Pancreas (tissue), 10 donors: ENCODE measurements at regions of chr1 and their contacts with region 1.

Region 1: GRCh38 chr1:155309423-155310021 is 856 bp downstream of the FDPS start:
- DNase-seq: peak; percentile 35 to 89 (median 68)
- ATAC-seq: peak in 3 of 4 donors; percentile 4 to 8 (median 5)
- H3K4me3 ChIP-seq: peak overlapping the region; percentile 50 to 95 (median 82)
- H3K27ac ChIP-seq: peak overlapping the region; percentile 76 to 90 (median 82)
- H3K4me1 ChIP-seq: peaks cover 0 to 7% (median 0%) of the 10 kb centered on the region in 3 donors
- H3K27me3 ChIP-seq: no peaks in the 10 kb centered on the region
- CTCF ChIP-seq: no peak

Region 2: GRCh38 chr1:155277070-155277895 is 32.2 kb before region 1 on chr1 and contains the start of gene HCN3:
- intact Hi-C with region 1: loop called in 1 of 3 experiments (anchors 5 kb)
- DNase-seq: peak; percentile 96 to 99 (median 98)
- ATAC-seq: peak; percentile 75 to 87 (median 86)
- H3K4me3 ChIP-seq: peak within 1 kb of the TSS; percentile 52 to 91 (median 80)
- H3K27ac ChIP-seq: peak within 1 kb of the TSS; percentile 28 to 55 (median 48)
- H3K4me1 ChIP-seq: peaks cover 0 to 3% (median 3%) of the 10 kb centered on the region in 3 donors
- H3K27me3 ChIP-seq: no peaks in the 10 kb centered on the region
- CTCF ChIP-seq: peak; percentile 45 to 56 (median 54)
- total RNA-seq, gene HCN3: 0.66 to 2.6 (median 1.4) TPM

Region 3: GRCh38 chr1:155466996-155467395 is 157.5 kb after region 1 on chr1:
- intact Hi-C with region 1: no loop called
- DNase-seq: no peak
- ATAC-seq: peak in 2 of 4 donors; percentile 46 to 63
- H3K4me3 ChIP-seq: no peak overlapping the region
- H3K27ac ChIP-seq: peak overlapping the region in 2 of 4 donors; percentile 3 to 10
- H3K4me1 ChIP-seq: peaks cover 5 to 12% (median 11%) of the 10 kb centered on the region in 3 donors
- H3K27me3 ChIP-seq: no peaks in the 10 kb centered on the region
- CTCF ChIP-seq: no peak